Left ventricle myocardium superior (tissue), 1 donor: ENCODE measurements at regions of chr9 and their contacts with region 1.

Region 1: GRCh38 chr9:128034821-128035764 is 32.0 kb downstream of the NAIF1 start:
- DNase-seq: peak; percentile 68
- ATAC-seq: peak; percentile 96

Region 2: DNA sequence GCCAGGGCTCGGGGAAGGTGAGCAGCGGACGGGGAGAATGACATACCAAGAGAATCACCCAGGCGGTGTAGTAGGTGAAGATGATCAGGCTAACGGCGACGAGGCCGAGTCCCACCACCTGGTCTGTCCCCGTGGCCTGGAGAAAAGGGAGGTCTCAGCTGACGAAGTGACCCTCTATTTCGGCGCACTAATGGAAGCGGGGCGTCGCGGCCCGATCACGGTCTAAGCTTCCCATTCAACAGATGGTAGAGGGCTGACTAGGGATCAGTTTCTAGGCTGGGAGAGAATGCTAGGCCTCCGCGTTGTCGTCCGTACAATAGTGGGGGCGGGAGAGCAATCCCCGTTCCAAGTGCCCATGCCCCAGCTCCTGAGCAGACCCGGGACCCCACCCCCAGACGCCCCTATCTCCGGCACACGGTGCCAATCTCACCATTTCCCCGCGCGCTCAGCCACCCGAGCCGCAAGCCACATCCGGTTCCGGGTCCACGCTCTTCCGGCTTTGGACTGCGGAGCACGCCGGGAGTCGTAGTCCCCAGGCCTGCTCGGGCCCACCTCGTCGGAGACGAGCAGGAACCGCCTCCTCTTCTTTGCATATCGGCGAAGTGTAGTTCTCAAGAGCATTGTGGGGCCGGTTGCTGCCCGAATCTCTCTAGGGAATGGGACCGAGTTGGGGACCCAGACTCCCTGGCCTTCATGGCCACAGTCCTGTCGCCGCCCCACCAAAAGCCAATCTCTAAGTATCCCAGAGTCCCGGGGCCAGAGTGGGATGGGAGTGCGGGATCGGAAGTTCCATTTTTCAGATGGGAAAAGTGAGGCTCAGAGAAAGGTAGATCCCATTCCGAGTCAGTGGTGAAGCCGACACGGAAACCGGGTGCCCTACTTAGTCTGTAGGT is 97.5 kb before region 1 on chr9 and contains the start of gene DPM2:
- intact Hi-C with region 1: loop called (anchors 5 kb)
- DNase-seq: peak; percentile 90
- ATAC-seq: peak; percentile 88
- total RNA-seq, gene DPM2: 11.1 TPM

Region 3: DNA sequence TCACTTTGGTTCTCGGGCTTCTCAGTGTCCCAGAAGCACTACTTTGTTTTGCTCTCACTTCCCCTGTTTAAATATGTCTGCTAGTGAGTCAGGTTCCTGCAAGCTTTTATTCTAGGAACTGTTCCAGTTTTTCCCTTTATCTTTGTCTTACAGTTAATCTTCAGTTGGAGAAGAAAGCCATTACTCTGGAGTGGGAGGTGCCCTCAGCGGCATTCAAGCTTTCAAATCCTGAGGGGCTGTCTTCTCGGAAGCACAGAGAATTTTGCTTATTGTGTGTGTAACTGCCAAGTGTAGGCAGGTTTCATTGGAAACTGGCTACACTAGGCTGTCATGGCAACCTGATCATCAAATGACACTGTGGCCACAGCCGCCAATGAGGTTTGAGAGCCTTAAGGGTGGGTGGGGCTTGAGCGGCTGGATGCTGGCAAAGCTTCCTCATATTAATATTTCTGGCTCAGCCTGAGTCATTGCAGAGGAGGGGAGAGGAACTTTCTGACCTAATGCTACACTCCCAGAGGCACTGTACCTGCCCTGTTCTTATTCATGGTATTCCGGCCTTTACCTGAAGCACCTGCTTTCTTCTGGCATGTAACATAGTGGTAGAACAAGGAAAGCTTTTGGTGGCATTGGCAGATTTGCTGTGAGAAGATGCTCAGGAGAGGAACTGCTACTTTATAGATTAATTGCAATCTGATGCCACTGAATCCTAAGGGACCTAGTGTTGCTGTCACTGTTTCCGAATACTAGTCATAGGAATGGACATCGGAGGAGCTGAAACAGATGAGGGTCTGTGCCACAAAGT is 59.3 kb after region 1 on chr9:
- intact Hi-C with region 1: no loop called
- DNase-seq: peak; percentile 90
- ATAC-seq: peak; percentile 78